Astrocyte of the cerebellum (primary cell): ENCODE measurements at regions of chr10 and their contacts with region 1.

Region 1: GRCh38 chr10:78650122-78650521 is 418.6 kb upstream of the ZMIZ1 start:
- DNase-seq: no peak
- H3K4me3 ChIP-seq: no peak overlapping the region
- CTCF ChIP-seq: no peak

Region 2: GRCh38 chr10:78594559-78595268 is 55.4 kb before region 1 on chr10:
- in situ Hi-C with region 1: loop called (anchors 5 kb)
- DNase-seq: no peak
- H3K4me3 ChIP-seq: no peak overlapping the region
- CTCF ChIP-seq: no peak

Region 3: GRCh38 chr10:78604721-78605120 is 45.4 kb before region 1 on chr10:
- in situ Hi-C with region 1: no loop called
- DNase-seq: no peak
- H3K4me3 ChIP-seq: no peak overlapping the region
- CTCF ChIP-seq: no peak

Region 4: GRCh38 chr10:78616130-78616695 is 33.9 kb before region 1 on chr10:
- in situ Hi-C with region 1: no loop called
- DNase-seq: no peak
- H3K4me3 ChIP-seq: no peak overlapping the region
- CTCF ChIP-seq: no peak